Caco-2 (cell line): ENCODE measurements at regions of chr4 and their contacts with region 1.

Region 1: GRCh38 chr4:179867300-179867878 is 2375.8 kb upstream of the TENM3 start:
- DNase-seq: peak; percentile 75 to 79
- H3K4me3 ChIP-seq: no peak overlapping the region
- H3K4me3 Mint-ChIP-seq: no peak overlapping the region
- H3K27ac Mint-ChIP-seq: no peak overlapping the region
- H3K4me1 ChIP-seq: no peaks in the 10 kb centered on the region
- H3K4me1 Mint-ChIP-seq: no peaks in the 10 kb centered on the region
- H3K27me3 ChIP-seq: no peaks in the 10 kb centered on the region
- H3K27me3 Mint-ChIP-seq: peaks cover 4% of the 10 kb centered on the region
- CTCF ChIP-seq: peak; percentile 75 to 86

Region 2: DNA sequence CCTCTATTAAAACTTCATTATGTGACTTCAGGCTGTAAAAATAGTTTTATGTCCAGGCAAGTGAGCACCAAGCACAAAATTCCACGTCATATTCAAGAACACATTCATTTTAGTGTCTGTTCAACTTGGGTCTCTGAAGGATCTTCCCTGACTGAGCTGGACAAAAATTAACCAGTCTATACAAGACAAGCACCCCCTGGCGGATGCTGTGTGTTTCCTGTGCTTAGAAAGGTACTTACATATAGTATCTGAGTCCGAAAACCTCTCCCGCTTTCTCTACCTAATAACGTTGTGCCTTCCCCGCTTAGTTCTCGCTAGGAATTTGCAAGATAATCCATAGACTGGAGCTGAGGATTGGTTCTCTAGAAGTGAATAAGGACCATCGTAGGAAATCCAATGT is 161.3 kb after region 1 on chr4:
- CTCF ChIA-PET with region 1: interaction called, 14 read pairs
- POLR2A ChIA-PET with region 1: no interaction called
- intact Hi-C with region 1: loop called (anchors 1 kb)
- DNase-seq: peak; percentile 64 to 65
- H3K4me3 ChIP-seq: no peak overlapping the region
- H3K4me3 Mint-ChIP-seq: no peak overlapping the region
- H3K27ac Mint-ChIP-seq: no peak overlapping the region
- H3K4me1 ChIP-seq: no peaks in the 10 kb centered on the region
- H3K4me1 Mint-ChIP-seq: no peaks in the 10 kb centered on the region
- H3K27me3 ChIP-seq: no peaks in the 10 kb centered on the region
- H3K27me3 Mint-ChIP-seq: peaks cover 4% of the 10 kb centered on the region
- CTCF ChIP-seq: peak; percentile 45 to 58

Region 3: GRCh38 chr4:180150818-180151217 is 283.4 kb after region 1 on chr4:
- CTCF ChIA-PET with region 1: interaction called, 4 read pairs
- POLR2A ChIA-PET with region 1: no interaction called
- intact Hi-C with region 1: loop called (anchors 1 kb)
- DNase-seq: no peak
- H3K4me3 ChIP-seq: no peak overlapping the region
- H3K4me3 Mint-ChIP-seq: no peak overlapping the region
- H3K27ac Mint-ChIP-seq: no peak overlapping the region
- H3K4me1 ChIP-seq: no peaks in the 10 kb centered on the region
- H3K4me1 Mint-ChIP-seq: no peaks in the 10 kb centered on the region
- H3K27me3 ChIP-seq: no peaks in the 10 kb centered on the region
- H3K27me3 Mint-ChIP-seq: peaks cover 3% of the 10 kb centered on the region
- CTCF ChIP-seq: peak; percentile 40 to 56